HEK293 (cell line): ENCODE measurements at regions of chr5 and their contacts with region 1.

Region 1: GRCh38 chr5:81194633-81195333 is 38.3 kb upstream of the CKMT2 start:
- H3K4me3 ChIP-seq: no peak overlapping the region
- H3K27ac ChIP-seq: no peak overlapping the region
- H3K4me1 ChIP-seq: no peaks in the 10 kb centered on the region
- CTCF ChIP-seq: peak; percentile 90

Region 2: GRCh38 chr5:80686757-80687156 is 508.0 kb before region 1 on chr5:
- CTCF ChIA-PET with region 1: interaction called, 15 read pairs
- POLR2A ChIA-PET with region 1: no interaction called
- H3K4me3 ChIP-seq: no peak overlapping the region
- H3K27ac ChIP-seq: no peak overlapping the region
- H3K4me1 ChIP-seq: no peaks in the 10 kb centered on the region
- CTCF ChIP-seq: no peak

Region 3: DNA sequence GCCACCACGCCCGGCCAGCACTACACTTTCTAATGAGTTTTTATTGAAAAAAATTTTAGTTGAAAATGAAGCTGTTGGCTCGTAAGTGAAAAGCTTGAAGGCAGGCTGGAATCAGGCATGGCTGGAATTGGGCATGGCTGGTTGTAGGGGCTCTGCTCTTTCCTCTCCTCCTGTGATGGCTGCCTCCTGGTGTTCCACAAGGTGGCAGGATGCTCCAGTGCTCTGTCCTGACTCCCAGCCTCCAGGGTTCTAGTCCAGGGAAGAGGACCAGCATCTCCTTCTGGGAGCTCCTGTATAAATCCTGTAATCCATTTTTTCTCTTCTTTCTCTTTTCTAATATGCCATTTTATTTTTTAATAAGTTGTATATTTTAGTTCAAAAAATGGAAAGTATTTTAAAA is 482.8 kb before region 1 on chr5:
- CTCF ChIA-PET with region 1: interaction called, 27 read pairs
- POLR2A ChIA-PET with region 1: no interaction called
- H3K4me3 ChIP-seq: no peak overlapping the region
- H3K27ac ChIP-seq: no peak overlapping the region
- H3K4me1 ChIP-seq: no peaks in the 10 kb centered on the region
- CTCF ChIP-seq: peak; percentile 36; the same call in 1 of the 2 replicates

Region 4: GRCh38 chr5:81165493-81166119 is 29.2 kb before region 1 on chr5:
- CTCF ChIA-PET with region 1: interaction called, 12 read pairs
- POLR2A ChIA-PET with region 1: no interaction called
- H3K4me3 ChIP-seq: no peak overlapping the region
- H3K27ac ChIP-seq: no peak overlapping the region
- H3K4me1 ChIP-seq: no peaks in the 10 kb centered on the region
- CTCF ChIP-seq: peak; percentile 58

Region 5: GRCh38 chr5:81207009-81207408 is 12.2 kb after region 1 on chr5:
- CTCF ChIA-PET with region 1: interaction called, 34 read pairs
- POLR2A ChIA-PET with region 1: no interaction called
- H3K4me3 ChIP-seq: no peak overlapping the region
- H3K27ac ChIP-seq: no peak overlapping the region
- H3K4me1 ChIP-seq: no peaks in the 10 kb centered on the region
- CTCF ChIP-seq: peak; percentile 45; the same call in 1 of the 2 replicates

Region 6: GRCh38 chr5:81219389-81219788 is 24.6 kb after region 1 on chr5:
- CTCF ChIA-PET with region 1: no interaction called
- POLR2A ChIA-PET with region 1: no interaction called
- H3K4me3 ChIP-seq: no peak overlapping the region
- H3K27ac ChIP-seq: no peak overlapping the region
- H3K4me1 ChIP-seq: no peaks in the 10 kb centered on the region
- CTCF ChIP-seq: no peak

Region 7: GRCh38 chr5:81936066-81936465 is 741.3 kb after region 1 on chr5:
- CTCF ChIA-PET with region 1: no interaction called
- POLR2A ChIA-PET with region 1: no interaction called
- H3K4me3 ChIP-seq: no peak overlapping the region
- H3K27ac ChIP-seq: no peak overlapping the region
- H3K4me1 ChIP-seq: no peaks in the 10 kb centered on the region
- CTCF ChIP-seq: no peak